ENCODE measurements at regions of chr21 and their contacts with region 1.

Region 1: GRCh38 chr21:38669176-38669575 is 136.6 kb upstream of the ETS2 start:
- DNase-seq: no peak
- ATAC-seq: no peak
- H3K4me3 ChIP-seq: no peak overlapping the region
- H3K4me3 Mint-ChIP-seq: no peak overlapping the region
- H3K27ac ChIP-seq: no peak overlapping the region
- H3K27ac Mint-ChIP-seq: no peak overlapping the region
- H3K4me1 ChIP-seq: no peaks in the 10 kb centered on the region
- H3K4me1 Mint-ChIP-seq: peaks cover 0 to 4% (median 0%) of the 10 kb centered on the region in 7 donors
- H3K27me3 ChIP-seq: no peaks in the 10 kb centered on the region
- H3K27me3 Mint-ChIP-seq: peaks cover 13 to 30% (median 16%) of the 10 kb centered on the region in 5 donors

Region 2: DNA sequence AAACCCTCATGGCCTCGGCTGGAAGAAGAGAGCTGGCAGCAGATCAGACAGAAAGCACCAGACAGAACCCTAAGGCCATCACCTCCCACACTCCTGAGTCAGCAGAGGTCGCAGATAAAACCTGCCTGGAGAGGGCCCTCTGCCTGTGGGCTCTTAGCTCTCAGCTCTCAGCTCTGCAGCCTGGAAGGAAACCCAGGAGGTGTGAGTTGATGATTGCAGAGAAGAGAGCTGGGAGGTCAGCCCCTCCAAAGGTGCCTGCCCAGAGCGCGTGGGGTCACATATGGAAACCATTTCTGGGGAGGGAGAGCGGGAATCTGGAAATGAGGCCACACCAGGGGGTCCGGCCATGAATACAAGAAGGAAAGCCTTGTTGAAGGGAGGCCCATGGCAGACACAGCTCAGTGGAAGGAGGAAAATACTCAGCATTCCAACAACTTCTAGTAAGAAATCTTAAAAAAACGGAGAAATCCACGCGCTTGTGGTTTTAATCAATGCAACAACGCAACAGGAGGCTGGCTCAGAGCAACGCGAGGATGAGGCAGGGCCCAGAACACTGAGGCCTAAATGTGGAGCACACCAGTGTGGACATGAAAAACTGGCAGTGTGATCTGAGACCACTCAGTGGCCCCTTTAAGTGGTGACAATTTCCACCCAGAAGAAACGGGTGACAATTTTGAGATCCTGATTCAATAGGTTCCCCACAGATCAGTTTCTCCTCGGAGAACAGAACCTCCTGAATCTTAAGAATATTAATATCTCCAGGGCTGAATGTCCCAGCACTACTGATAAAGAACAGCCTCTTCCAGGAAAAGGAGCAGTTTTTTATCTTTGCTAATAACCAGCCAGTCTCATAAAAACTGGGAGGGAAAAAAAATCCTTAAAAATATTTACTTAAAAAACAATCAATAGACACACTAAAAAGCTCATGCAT is 468.3 kb after region 1 on chr21:
- CTCF ChIA-PET with region 1: no interaction called
- POLR2A ChIA-PET with region 1: no interaction called
- intact Hi-C with region 1: loop called in 1 of 2 experiments (anchors 1 kb)
- DNase-seq: no peak
- ATAC-seq: no peak
- H3K4me3 ChIP-seq: no peak overlapping the region
- H3K4me3 Mint-ChIP-seq: no peak overlapping the region
- H3K27ac ChIP-seq: no peak overlapping the region
- H3K27ac Mint-ChIP-seq: no peak overlapping the region
- H3K4me1 ChIP-seq: no peaks in the 10 kb centered on the region
- H3K4me1 Mint-ChIP-seq: no peaks in the 10 kb centered on the region
- H3K27me3 ChIP-seq: no peaks in the 10 kb centered on the region
- H3K27me3 Mint-ChIP-seq: peaks cover 0 to 4% (median 0%) of the 10 kb centered on the region in 5 donors

Measured in naive thymus-derived CD4-positive, alpha-beta T cell (primary cell).